Heart left ventricle (tissue), 16 donors: ENCODE measurements at regions of chr4 and their contacts with region 1.

Region 1: GRCh38 chr4:159175085-159175988 is 72.5 kb downstream of the RAPGEF2 start:
- DNase-seq: peak in 4 of 5 donors; percentile 58 to 74 (median 66)
- ATAC-seq: peak; percentile 69 to 90 (median 88)
- H3K4me3 ChIP-seq: peak overlapping the region in 7 of 12 donors; percentile 4 to 19 (median 16)
- H3K27ac ChIP-seq: peak overlapping the region in 11 of 12 donors; percentile 13 to 75 (median 50)
- H3K4me1 ChIP-seq: peaks cover 11 to 98% (median 85%) of the 10 kb centered on the region in 12 donors
- H3K27me3 ChIP-seq: no peaks in the 10 kb centered on the region
- CTCF ChIP-seq: peak; percentile 69 to 89 (median 84)
- POLR2A ChIP-seq: no peak

Region 2: DNA sequence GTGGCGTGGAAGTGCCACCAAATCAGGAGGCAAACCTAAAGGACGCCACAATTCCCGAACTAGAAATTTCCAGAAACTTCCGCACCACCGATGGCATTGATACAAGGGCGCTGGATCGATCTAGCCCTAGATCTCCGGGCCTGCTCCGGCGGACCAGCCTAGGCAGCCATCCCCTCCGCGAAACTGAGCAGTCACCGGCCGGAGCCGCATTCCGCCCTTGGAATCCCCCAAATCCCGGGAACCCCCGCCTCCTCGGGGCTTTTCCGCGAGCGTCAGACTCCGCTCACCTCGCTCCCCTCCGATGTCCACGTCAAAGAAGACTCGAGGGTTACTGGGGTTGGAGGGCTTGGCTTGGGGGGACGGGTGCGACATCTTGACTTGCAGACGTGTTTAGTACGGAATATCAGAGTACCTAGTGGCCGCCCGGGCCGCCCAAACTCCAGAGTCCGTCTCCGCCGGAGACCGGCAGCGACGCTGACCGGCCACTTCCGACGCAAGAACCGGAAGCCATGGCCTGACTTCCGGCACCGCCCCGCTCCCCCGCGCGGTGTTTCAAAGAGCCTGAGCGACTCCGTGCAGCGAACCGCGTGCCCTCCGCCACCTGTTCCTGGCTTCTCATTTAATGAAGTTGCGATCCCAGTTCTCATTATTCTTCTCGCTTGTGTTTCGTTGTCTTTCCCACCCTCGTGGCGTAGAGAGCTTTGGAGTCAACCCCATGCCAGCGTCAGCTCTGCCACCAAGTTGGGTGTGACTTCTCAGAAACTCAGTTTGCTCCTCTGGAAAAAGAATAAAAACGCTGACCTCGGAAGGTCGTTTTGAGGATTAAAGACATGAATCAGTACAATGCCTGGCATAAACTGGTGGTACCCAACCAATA is 452.2 kb before region 1 on chr4 and contains the start of gene PPID:
- intact Hi-C with region 1: loop called in 7 of 10 experiments (anchors 5 to 10 kb)
- DNase-seq: peak; percentile 86 to 92 (median 89)
- ATAC-seq: peak; percentile 91 to 98 (median 98)
- H3K4me3 ChIP-seq: peak within 1 kb of the TSS; percentile 70 to 95 (median 85)
- H3K27ac ChIP-seq: peak within 1 kb of the TSS; percentile 76 to 96 (median 94)
- H3K4me1 ChIP-seq: peaks cover 0 to 18% (median 12%) of the 10 kb centered on the region in 12 donors
- H3K27me3 ChIP-seq: no peaks in the 10 kb centered on the region
- CTCF ChIP-seq: no peak
- POLR2A ChIP-seq: peak in 1 of 2 donors; percentile 70
- total RNA-seq, gene PPID: 24.1 to 43.4 (median 30.7) TPM

Region 3: GRCh38 chr4:158856852-158857251 is 318.5 kb before region 1 on chr4:
- intact Hi-C with region 1: loop called (anchors 1 to 10 kb)
- DNase-seq: no peak
- ATAC-seq: peak; percentile 18 to 68 (median 60)
- H3K4me3 ChIP-seq: no peak overlapping the region
- H3K27ac ChIP-seq: no peak overlapping the region
- H3K4me1 ChIP-seq: peaks cover 0 to 16% (median 0%) of the 10 kb centered on the region in 12 donors
- H3K27me3 ChIP-seq: no peaks in the 10 kb centered on the region
- CTCF ChIP-seq: peak; percentile 39 to 71 (median 59)
- POLR2A ChIP-seq: no peak

Region 4: DNA sequence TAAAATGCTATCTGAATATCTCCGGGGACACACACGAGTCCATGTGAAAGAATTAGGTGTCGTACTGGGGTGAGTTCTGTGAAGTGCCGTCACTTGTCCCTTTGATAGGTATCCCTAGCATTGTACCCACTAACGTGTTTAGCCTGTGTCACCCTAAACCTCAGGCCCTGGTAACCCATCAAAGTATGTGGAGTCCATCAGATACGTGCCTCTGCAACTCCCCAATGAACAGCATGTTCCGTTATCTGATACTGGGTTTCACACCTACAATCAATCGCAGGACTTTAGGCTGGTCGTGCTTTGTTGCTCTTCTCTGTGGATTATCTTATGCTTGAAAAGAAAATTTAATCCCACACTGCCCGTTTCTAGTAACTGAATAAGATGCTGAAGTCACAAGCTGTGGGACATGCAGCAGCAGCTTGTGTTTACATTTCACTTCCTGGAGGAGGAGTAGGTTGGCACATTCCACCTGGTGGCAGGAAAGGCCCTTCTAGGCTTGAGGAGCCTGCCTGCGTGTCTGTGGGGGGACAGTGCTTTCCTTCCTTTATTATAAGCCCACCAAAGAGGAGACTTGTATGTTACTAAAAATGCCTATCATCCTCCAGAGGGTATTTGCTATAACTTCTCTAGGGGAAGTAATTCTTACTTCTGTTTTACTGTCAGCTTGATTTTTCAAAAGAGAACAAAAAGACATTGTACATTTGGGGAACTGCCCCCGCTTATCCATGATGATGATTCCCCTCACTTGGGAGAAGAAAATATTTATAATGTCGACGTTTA is 279.4 kb before region 1 on chr4:
- intact Hi-C with region 1: loop called in 1 of 10 experiments (anchors 10 kb)
- DNase-seq: no peak
- ATAC-seq: peak in 2 of 4 donors; percentile 24 to 50
- H3K4me3 ChIP-seq: no peak overlapping the region
- H3K27ac ChIP-seq: peak overlapping the region in 5 of 12 donors; percentile 21 to 46 (median 35)
- H3K4me1 ChIP-seq: peaks cover 0 to 27% (median 12%) of the 10 kb centered on the region in 12 donors
- H3K27me3 ChIP-seq: no peaks in the 10 kb centered on the region
- CTCF ChIP-seq: peak in 3 of 12 donors; percentile 11 to 22 (median 15)
- POLR2A ChIP-seq: no peak

Region 5: GRCh38 chr4:159048166-159048886 is 127.0 kb before region 1 on chr4:
- intact Hi-C with region 1: loop called in 1 of 10 experiments (anchors 10 kb)
- DNase-seq: peak; percentile 71 to 76 (median 74)
- ATAC-seq: peak; percentile 93 to 98 (median 96)
- H3K4me3 ChIP-seq: peak overlapping the region in 10 of 12 donors; percentile 15 to 59 (median 47)
- H3K27ac ChIP-seq: peak overlapping the region in 7 of 12 donors; percentile 14 to 67 (median 48)
- H3K4me1 ChIP-seq: peaks cover 0 to 14% (median 5%) of the 10 kb centered on the region in 12 donors
- H3K27me3 ChIP-seq: no peaks in the 10 kb centered on the region
- CTCF ChIP-seq: peak in 1 of 12 donors; percentile 25
- POLR2A ChIP-seq: no peak

Region 6: DNA sequence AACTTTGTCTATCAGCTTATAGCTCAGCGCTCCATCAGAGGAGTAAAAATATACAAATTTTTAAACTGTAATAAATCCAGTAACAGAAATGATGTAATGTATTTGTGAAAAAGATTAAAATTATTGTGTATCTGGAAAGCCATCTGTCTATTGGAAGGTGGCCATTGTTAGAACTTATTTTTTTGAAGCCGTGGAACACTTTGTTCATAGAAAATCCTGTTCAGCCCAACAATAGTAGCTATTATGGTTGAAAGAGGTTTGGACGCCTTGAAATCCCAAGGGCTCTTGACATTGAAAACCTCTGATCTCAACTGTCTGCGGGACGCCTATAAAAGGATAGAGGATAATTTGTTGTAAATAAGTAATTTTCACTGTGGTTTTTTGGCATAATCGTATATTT is 25.8 kb after region 1 on chr4:
- intact Hi-C with region 1: loop called in 1 of 10 experiments (anchors 2 kb)
- DNase-seq: no peak
- ATAC-seq: peak; percentile 25 to 54 (median 42)
- H3K4me3 ChIP-seq: peak overlapping the region in 3 of 12 donors; percentile 1 to 3 (median 2)
- H3K27ac ChIP-seq: peak overlapping the region; percentile 35 to 79 (median 71)
- H3K4me1 ChIP-seq: peaks cover 6 to 80% (median 52%) of the 10 kb centered on the region in 12 donors
- H3K27me3 ChIP-seq: no peaks in the 10 kb centered on the region
- CTCF ChIP-seq: no peak
- POLR2A ChIP-seq: no peak